H1 (cell line): ENCODE measurements at regions of chr20 and their contacts with region 1.

Region 1: DNA sequence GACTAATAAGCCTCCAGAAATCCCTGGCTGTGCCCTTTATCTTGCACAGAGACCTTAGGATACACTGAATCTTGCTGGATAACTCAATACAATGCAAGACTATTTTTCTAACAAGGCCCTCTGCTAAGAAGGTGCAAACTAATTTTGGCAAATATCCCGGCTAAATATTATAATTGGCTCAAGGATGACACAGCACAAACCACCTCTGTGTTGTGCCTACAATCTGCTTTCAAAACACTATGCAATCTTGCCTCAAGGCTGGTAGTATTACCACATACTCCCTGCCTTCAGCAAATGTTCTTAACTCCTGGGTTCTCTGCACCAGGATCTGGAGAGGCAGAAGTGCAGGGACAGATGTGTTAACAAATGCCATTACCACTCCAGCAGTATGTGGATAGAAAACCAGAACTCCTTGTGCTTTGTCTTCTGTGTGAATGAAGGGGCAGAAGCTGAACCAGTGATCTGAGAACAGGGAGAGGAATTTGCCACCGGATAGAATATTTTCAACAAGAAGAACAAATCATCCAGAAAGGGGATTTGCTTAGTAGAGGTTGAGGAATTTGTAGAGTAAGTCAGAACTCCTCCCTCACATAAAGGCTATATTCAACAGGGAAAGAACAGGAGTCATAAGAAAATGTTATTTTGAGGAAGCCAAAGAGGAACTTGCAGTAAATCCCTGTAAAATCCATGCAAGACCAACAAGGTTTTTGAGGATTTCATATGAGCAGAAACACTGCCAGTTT is 74.1 kb upstream of the SLC4A11 start:
- DNase-seq: no peak
- H3K4me3 ChIP-seq: no peak overlapping the region
- H3K27ac ChIP-seq: no peak overlapping the region
- H3K4me1 ChIP-seq: no peaks in the 10 kb centered on the region; a peak in 1 of 7 replicates
- H3K27me3 ChIP-seq: no peaks in the 10 kb centered on the region
- CTCF ChIP-seq: no peak
- EP300 ChIP-seq: no peak
- POLR2A ChIP-seq: no peak
- RAD21 ChIP-seq: no peak

Region 2: GRCh38 chr20:3262566-3262965 is 50.5 kb before region 1 on chr20:
- CTCF ChIA-PET with region 1: interaction called, 10 read pairs
- POLR2A ChIA-PET with region 1: interaction called, 3 read pairs
- DNase-seq: no peak
- H3K4me3 ChIP-seq: no peak overlapping the region
- H3K27ac ChIP-seq: no peak overlapping the region
- H3K4me1 ChIP-seq: no peaks in the 10 kb centered on the region
- H3K27me3 ChIP-seq: no peaks in the 10 kb centered on the region
- CTCF ChIP-seq: no peak
- EP300 ChIP-seq: no peak
- POLR2A ChIP-seq: no peak
- RAD21 ChIP-seq: no peak

Region 3: GRCh38 chr20:3325864-3326263 is 12.8 kb after region 1 on chr20:
- CTCF ChIA-PET with region 1: interaction called, 19 read pairs
- POLR2A ChIA-PET with region 1: no interaction called
- DNase-seq: no peak
- H3K4me3 ChIP-seq: no peak overlapping the region
- H3K27ac ChIP-seq: no peak overlapping the region
- H3K4me1 ChIP-seq: no peaks in the 10 kb centered on the region
- H3K27me3 ChIP-seq: no peaks in the 10 kb centered on the region
- CTCF ChIP-seq: no peak
- EP300 ChIP-seq: no peak
- POLR2A ChIP-seq: no peak
- RAD21 ChIP-seq: no peak